Activated CD8-positive, alpha-beta T cell treated with anti-CD3 and anti-CD28 coated beads for 36 hours (primary cell): ENCODE measurements at regions of chr4 and their contacts with region 1.

Region 1: DNA sequence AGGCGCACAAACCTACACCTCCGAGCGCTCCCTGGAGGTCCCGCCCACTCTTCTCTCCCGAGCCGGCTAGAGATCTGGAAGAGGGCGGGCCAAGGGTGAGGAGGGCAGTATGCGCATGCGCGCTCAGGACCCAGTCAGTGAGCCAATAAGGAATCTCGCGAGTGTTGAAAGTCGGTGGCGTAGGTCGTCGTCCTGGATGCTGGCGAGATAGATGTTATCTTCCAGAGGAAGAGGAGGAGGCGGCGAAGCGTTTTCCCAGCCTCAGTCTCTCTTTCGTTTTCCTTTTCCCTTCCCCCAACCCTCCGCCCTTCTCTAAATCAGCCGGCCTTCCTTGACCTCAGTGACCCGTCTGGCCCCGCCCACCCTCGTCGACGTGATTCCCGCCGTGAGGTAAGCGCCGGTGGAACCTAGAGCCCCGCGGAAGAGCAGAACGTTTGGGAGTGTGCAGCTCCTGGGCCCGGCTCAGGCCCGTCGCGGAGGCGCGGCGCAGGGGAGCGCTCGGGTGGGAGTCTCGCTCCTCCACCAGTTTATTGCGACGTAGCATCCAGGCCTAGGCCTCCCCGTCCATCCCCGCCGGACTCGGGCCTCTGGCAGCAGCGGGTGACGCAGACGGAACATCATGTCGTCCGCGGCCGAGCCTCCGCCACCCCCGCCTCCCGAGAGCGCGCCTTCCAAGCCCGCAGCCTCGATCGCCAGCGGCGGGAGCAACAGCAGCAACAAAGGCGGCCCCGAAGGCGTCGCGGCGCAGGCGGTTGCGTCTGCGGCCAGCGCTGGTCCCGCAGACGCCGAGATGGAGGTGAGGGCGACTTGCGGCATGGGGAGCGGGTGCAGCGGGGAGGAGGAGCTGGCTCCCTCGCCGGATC is at the start of gene SMARCA5:
- DNase-seq: peak; percentile 97
- ATAC-seq: peak; percentile 85
- H3K4me3 Mint-ChIP-seq: peak within 1 kb of the TSS; percentile 95
- H3K27ac Mint-ChIP-seq: peak within 1 kb of the TSS; percentile 93
- H3K4me1 Mint-ChIP-seq: peaks cover 22% of the 10 kb centered on the region
- H3K27me3 Mint-ChIP-seq: no peaks in the 10 kb centered on the region
- CTCF ChIP-seq: no peak
- total RNA-seq, gene SMARCA5: 61.2 to 62.1 TPM

Region 2: DNA sequence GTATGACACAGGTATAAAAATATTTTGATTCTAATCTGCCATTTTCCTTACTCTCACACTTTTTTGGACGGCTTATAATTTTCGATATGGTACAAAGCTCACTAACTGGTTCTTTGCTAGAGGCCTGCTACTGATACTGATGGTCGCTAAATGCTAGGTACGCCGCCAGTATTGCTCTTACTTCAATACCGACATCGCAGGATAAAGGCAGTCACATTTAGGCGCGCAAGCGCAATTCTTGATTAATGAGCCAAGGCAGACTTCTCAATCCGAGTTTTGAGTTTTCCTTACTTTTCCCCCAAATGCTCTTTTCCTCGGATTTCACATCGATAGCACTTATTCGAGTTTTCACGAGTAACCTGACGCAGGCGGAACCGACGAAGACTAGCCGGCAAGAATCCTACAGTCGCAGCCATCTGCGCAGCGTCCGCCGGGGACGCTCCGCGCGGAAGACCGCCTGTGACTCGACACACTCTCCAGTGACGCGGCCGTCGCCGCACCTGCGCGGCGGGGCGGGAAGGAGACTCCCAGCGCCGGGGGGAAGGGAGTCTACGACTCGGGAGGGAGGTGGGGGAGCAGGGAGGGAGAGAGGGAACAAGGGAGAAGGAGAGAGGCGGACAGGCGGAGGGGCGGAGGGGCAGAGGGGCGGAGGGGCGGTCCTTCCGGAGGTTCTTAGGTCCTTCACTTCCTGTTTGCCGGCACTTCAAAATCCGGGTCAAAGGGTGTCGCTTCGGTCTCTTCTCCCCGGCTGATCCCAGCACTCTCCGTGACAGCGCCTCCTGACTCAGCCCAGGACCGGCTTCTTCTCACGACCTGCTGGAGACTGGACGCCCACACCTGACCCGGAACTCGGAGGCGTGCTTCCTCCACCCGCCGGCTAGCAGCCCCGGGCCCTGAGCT is 329.1 kb before region 1 on chr4 and contains the start of gene USP38:
- CTCF ChIA-PET with region 1: interaction called, 3 read pairs
- POLR2A ChIA-PET with region 1: interaction called, 6 read pairs
- intact Hi-C with region 1: loop called (anchors 10 kb)
- DNase-seq: peak; percentile 95
- ATAC-seq: peak; percentile 90
- H3K4me3 Mint-ChIP-seq: peak within 1 kb of the TSS; percentile 82
- H3K27ac Mint-ChIP-seq: peak within 1 kb of the TSS; percentile 94
- H3K4me1 Mint-ChIP-seq: peaks cover 33% of the 10 kb centered on the region
- H3K27me3 Mint-ChIP-seq: no peaks in the 10 kb centered on the region
- CTCF ChIP-seq: no peak
- total RNA-seq, gene USP38: 16.8 to 18.5 TPM

Region 3: DNA sequence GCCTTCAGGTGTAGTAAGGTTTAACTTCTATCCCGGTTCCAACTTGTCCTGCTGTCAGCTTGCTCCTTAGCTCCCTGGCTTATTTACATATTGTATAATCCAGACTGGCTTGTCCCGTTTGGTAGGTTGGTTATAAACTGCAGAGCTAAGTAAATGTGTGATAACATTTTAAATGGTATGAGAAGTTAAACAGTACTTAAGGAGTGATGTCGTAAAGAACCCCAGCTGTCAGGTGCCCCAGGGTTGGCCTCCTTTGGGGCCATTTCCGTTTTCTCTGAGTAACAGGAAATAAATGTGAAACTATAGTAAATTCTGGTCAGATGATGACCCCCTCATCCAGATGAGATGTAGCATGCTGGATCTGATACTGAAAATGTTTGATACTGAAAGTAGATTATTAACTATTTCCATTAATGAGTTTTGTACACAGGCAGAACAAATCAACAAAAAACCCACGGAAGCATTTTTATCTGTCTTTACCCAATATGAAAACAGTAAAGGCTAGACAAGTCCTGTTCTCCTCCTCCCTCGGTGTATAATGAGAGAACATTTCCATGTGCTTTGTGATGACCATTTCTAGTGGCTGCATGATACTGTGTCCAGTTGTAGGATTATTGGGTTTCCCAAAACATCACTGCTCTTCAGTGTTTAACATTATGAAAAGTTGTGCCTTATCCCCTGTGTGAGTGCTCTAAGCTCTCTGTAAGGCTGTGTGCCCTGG is 154.5 kb before region 1 on chr4:
- CTCF ChIA-PET with region 1: no interaction called
- POLR2A ChIA-PET with region 1: no interaction called
- intact Hi-C with region 1: loop called (anchors 2 kb)
- DNase-seq: peak; percentile 74
- ATAC-seq: peak; percentile 94
- H3K4me3 Mint-ChIP-seq: peak overlapping the region; percentile 53
- H3K27ac Mint-ChIP-seq: peak overlapping the region; percentile 94
- H3K4me1 Mint-ChIP-seq: peaks cover 38% of the 10 kb centered on the region
- H3K27me3 Mint-ChIP-seq: no peaks in the 10 kb centered on the region
- CTCF ChIP-seq: no peak

Region 4: GRCh38 chr4:143616771-143617170 is 103.2 kb after region 1 on chr4:
- CTCF ChIA-PET with region 1: no interaction called
- POLR2A ChIA-PET with region 1: no interaction called
- intact Hi-C with region 1: no loop called
- DNase-seq: peak; percentile 51
- ATAC-seq: peak; percentile 77
- H3K4me3 Mint-ChIP-seq: no peak overlapping the region
- H3K27ac Mint-ChIP-seq: no peak overlapping the region
- H3K4me1 Mint-ChIP-seq: peaks cover 6% of the 10 kb centered on the region
- H3K27me3 Mint-ChIP-seq: peaks cover 8% of the 10 kb centered on the region
- CTCF ChIP-seq: no peak